PC-9 (cell line): ENCODE measurements at regions of chr11 and their contacts with region 1.

Region 1: GRCh38 chr11:65793144-65793581 is 6.3 kb downstream of the OVOL1 start:
- DNase-seq: peak; percentile 76 to 91
- H3K4me3 ChIP-seq: peak overlapping the region; percentile 33; the same call in 1 of the 2 replicates
- H3K27ac ChIP-seq: peak overlapping the region; percentile 89
- H3K4me1 ChIP-seq: peaks cover 62% of the 10 kb centered on the region
- H3K27me3 ChIP-seq: no peaks in the 10 kb centered on the region
- CTCF ChIP-seq: no peak

Region 2: DNA sequence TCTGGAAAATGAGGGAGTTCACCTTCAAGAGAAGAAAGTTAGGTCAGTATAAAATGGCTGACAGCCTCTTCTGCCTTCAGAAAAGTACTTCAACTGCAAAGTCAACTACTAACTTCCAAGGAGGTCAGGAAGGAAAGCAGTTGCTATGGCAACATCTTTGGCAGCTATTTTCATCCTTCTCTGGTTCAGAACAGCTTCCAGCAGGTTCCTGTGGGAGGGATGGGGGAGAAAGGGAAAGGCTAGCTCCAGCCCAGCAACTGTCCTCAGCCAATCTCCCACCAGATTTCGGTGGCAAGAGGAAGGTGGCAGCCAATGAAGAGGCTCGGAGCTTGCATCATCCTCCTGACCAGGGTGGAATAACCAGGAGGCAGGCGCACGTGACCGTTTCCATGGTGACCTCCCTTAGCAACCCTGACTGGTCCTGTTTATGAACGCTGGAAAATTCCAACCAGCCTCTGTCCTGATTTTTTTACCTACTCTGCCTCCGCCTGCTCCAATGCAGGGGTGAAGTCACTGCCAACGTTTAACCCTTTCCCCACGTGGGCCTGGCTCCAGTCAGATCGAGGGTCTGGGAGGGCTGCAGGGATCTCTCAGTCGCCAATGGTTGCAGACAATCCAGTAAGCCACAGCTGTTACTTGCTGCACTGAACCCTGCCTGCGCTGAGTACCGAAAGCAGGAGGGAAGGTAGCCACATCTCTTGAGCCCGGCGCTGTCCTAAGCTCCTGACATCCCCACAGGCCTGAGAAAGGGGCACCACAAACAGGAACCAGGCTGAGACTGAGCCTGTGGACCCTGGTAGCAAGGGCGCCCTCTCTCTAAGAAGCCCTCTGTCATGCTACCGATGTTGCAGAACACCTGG is 305.5 kb before region 1 on chr11:
- CTCF ChIA-PET with region 1: no interaction called
- POLR2A ChIA-PET with region 1: interaction called, 15 read pairs
- intact Hi-C with region 1: loop called (anchors 10 kb)
- DNase-seq: peak; percentile 98 to 99
- H3K4me3 ChIP-seq: no peak overlapping the region
- H3K27ac ChIP-seq: peak overlapping the region; percentile 88
- H3K4me1 ChIP-seq: peaks cover 79% of the 10 kb centered on the region
- H3K27me3 ChIP-seq: no peaks in the 10 kb centered on the region
- CTCF ChIP-seq: no peak

Region 3: GRCh38 chr11:67413266-67413849 is 1620.2 kb after region 1 on chr11:
- CTCF ChIA-PET with region 1: no interaction called
- POLR2A ChIA-PET with region 1: interaction called, 31 read pairs
- intact Hi-C with region 1: no loop called
- DNase-seq: no peak
- H3K4me3 ChIP-seq: no peak overlapping the region
- H3K27ac ChIP-seq: no peak overlapping the region
- H3K4me1 ChIP-seq: no peaks in the 10 kb centered on the region
- H3K27me3 ChIP-seq: no peaks in the 10 kb centered on the region
- CTCF ChIP-seq: no peak